ENCODE measurements at regions of chr18 and their contacts with region 1.

Region 1: GRCh38 chr18:46660955-46661749 is 4.1 kb upstream of the LOXHD1 start:
- H3K4me3 ChIP-seq: no peak overlapping the region
- H3K27ac ChIP-seq: no peak overlapping the region
- H3K4me1 ChIP-seq: no peaks in the 10 kb centered on the region
- CTCF ChIP-seq: no peak

Region 2: DNA sequence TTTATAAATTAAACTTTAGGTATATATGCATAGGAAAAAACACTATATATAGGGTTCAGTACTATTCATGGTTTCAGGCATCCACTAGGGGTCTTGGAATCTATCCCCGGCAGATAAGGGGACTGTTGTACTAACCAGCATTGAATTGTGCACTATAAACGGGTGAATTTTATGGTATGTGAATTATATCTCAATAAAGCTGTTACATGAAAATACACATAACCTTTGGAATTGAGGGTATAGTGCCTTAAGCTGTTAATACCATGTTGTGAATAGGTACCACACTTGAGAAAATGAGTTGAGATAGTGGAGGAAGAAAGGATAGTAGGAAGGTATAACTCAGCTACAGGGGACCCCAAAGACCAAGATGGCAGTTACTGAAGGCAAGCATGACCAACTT is 389.7 kb before region 1 on chr18:
- CTCF ChIA-PET with region 1: interaction called, 179 read pairs
- POLR2A ChIA-PET with region 1: no interaction called
- H3K4me3 ChIP-seq: no peak overlapping the region
- H3K27ac ChIP-seq: no peak overlapping the region
- H3K4me1 ChIP-seq: no peaks in the 10 kb centered on the region
- CTCF ChIP-seq: no peak

Region 3: DNA sequence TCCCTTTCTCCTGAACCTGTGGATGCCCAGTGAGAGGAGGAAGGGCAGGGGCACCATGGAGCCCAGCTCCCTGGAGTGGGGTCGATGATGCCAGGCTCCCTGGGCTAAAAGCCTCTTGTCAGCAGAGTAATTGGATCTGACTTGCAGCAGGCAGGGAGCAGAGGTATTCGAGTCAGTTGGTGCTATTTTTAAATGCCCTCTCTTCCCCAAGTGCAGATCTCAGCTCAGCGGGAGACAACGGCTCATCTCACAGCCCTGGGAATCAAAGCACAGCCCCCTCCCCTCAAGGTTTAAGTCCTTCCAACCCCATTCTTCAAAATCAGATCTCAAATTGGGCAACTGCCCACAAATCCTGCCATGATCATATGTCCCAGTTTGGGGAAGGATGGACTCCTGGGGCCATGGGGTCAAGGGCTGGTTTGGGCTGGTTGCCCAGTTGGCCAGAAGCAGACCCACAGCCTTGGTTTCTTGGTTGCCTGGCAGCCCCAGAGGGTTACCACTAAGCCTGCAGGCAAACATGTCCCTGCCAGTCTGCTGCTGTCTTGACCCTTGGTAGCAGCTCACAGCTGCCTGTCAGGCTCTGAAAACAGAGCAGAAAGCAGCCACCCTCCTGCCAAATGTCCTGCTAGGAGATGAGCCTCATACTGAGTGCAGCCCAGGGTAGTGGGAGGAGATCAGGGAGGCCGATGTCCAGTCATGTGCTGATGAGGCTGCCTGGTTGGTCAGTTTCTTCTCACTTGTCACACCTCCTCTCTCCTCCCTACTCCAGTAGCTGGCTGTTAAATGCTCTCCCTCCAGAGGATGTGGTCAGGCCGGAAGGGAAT is 249.1 kb before region 1 on chr18:
- CTCF ChIA-PET with region 1: no interaction called
- POLR2A ChIA-PET with region 1: no interaction called
- H3K4me3 ChIP-seq: no peak overlapping the region
- H3K27ac ChIP-seq: no peak overlapping the region
- H3K4me1 ChIP-seq: peaks cover 15% of the 10 kb centered on the region
- CTCF ChIP-seq: no peak

Region 4: GRCh38 chr18:46481048-46481846 is 179.9 kb before region 1 on chr18:
- CTCF ChIA-PET with region 1: interaction called, 17 read pairs
- POLR2A ChIA-PET with region 1: no interaction called
- H3K4me3 ChIP-seq: no peak overlapping the region
- H3K27ac ChIP-seq: no peak overlapping the region
- H3K4me1 ChIP-seq: no peaks in the 10 kb centered on the region; the same call in 1 of the 2 replicates
- CTCF ChIP-seq: no peak; the same call in 1 of the 2 replicates

Region 5: DNA sequence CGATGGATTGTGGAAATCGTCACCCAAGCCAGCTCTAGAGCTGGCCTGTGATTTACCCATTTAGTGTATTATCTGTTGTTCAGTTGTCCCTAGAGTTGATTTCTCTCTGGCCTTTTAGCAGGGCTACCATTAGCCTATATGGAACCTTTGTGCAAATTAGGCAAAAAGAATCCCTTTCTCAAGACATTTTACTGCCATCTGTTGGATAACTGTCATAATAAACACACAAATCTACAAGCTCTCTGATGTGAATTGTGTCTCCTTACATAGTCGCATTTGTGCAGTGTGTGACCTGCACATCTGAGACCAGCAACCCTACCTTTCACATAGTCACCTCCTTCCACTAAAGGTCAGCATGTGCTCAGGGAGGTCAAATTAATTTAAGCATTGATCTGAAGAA is 38.2 kb before region 1 on chr18:
- CTCF ChIA-PET with region 1: interaction called, 34 read pairs
- POLR2A ChIA-PET with region 1: no interaction called
- H3K4me3 ChIP-seq: no peak overlapping the region
- H3K27ac ChIP-seq: no peak overlapping the region
- H3K4me1 ChIP-seq: no peaks in the 10 kb centered on the region
- CTCF ChIP-seq: no peak

Region 6: GRCh38 chr18:46641917-46642316 is 19.2 kb before region 1 on chr18:
- CTCF ChIA-PET with region 1: interaction called, 27 read pairs
- POLR2A ChIA-PET with region 1: no interaction called
- H3K4me3 ChIP-seq: no peak overlapping the region
- H3K27ac ChIP-seq: no peak overlapping the region
- H3K4me1 ChIP-seq: no peaks in the 10 kb centered on the region
- CTCF ChIP-seq: no peak

Region 7: GRCh38 chr18:46672062-46672970 is 11.2 kb after region 1 on chr18:
- CTCF ChIA-PET with region 1: interaction called, 22 read pairs
- POLR2A ChIA-PET with region 1: no interaction called
- H3K4me3 ChIP-seq: no peak overlapping the region
- H3K27ac ChIP-seq: no peak overlapping the region
- H3K4me1 ChIP-seq: 0 out of 2 replicates have a peak, but pooled peaks cover 5% of the 10 kb centered on the region
- CTCF ChIP-seq: no peak